Activated CD4-positive, alpha-beta T cell treated with anti-CD3 and anti-CD28 coated beads for 36 hours (primary cell): ENCODE measurements at regions of chr9 and their contacts with region 1.

Region 1: GRCh38 chr9:19102631-19103345 is at the start of gene HAUS6:
- DNase-seq: peak; percentile 98
- ATAC-seq: peak; percentile 98
- H3K4me3 Mint-ChIP-seq: peak within 1 kb of the TSS; percentile 96
- H3K27ac Mint-ChIP-seq: peak within 1 kb of the TSS; percentile 96
- H3K4me1 Mint-ChIP-seq: peaks cover 25% of the 10 kb centered on the region
- H3K27me3 Mint-ChIP-seq: no peaks in the 10 kb centered on the region
- total RNA-seq, gene HAUS6: 29.3 to 32.5 TPM

Region 2: DNA sequence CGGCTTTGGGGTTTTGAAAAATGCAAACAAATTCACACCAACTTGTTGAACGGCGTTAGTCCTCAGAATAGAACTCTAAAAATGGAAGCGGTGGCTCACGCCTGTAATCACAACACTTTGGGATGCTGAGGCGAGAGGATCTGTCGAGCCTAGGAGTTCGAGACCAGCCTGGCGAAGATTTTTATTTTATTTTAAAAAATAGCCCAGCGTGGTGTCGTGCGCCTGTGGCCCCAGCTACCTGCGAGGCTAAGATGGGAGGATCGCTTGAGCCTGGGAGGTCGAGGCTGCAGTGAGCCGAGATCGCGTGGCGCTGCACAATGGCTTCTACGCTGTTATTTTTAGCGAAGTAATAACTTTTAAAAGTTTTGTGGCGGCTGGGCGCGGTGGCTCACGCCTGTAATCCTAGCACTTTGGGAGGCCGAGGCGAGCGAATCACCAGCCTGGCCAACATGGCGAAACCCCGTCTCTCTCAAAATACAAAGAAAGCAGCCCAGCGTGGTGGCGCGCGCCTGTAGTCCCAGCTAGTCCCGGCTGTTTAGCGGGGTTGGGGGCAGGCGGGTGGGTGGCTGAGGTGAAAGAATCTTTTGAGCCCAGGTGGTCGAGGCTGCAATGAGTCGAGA is 25.2 kb after region 1 on chr9:
- CTCF ChIA-PET with region 1: no interaction called
- POLR2A ChIA-PET with region 1: interaction called, 3 read pairs
- intact Hi-C with region 1: loop called (anchors 1 kb)
- DNase-seq: peak; percentile 54
- ATAC-seq: peak; percentile 14
- H3K4me3 Mint-ChIP-seq: peak overlapping the region; percentile 92
- H3K27ac Mint-ChIP-seq: peak overlapping the region; percentile 88
- H3K4me1 Mint-ChIP-seq: peaks cover 58% of the 10 kb centered on the region
- H3K27me3 Mint-ChIP-seq: no peaks in the 10 kb centered on the region

Region 3: GRCh38 chr9:19161257-19162025 is 58.7 kb after region 1 on chr9:
- CTCF ChIA-PET with region 1: no interaction called
- POLR2A ChIA-PET with region 1: no interaction called
- intact Hi-C with region 1: loop called (anchors 1 to 2 kb)
- DNase-seq: peak; percentile 78
- ATAC-seq: peak; percentile 98
- H3K4me3 Mint-ChIP-seq: peak overlapping the region; percentile 46
- H3K27ac Mint-ChIP-seq: peak overlapping the region; percentile 76
- H3K4me1 Mint-ChIP-seq: peaks cover 25% of the 10 kb centered on the region
- H3K27me3 Mint-ChIP-seq: no peaks in the 10 kb centered on the region

Region 4: GRCh38 chr9:19184144-19184917 is 81.5 kb after region 1 on chr9:
- CTCF ChIA-PET with region 1: interaction called, 3 read pairs
- POLR2A ChIA-PET with region 1: interaction called, 13 read pairs
- intact Hi-C with region 1: loop called in 1 of 2 experiments (anchors 1 kb)
- DNase-seq: peak; percentile 91
- ATAC-seq: peak; percentile 99
- H3K4me3 Mint-ChIP-seq: peak overlapping the region; percentile 56
- H3K27ac Mint-ChIP-seq: peak overlapping the region; percentile 91
- H3K4me1 Mint-ChIP-seq: peaks cover 21% of the 10 kb centered on the region
- H3K27me3 Mint-ChIP-seq: no peaks in the 10 kb centered on the region

Region 5: DNA sequence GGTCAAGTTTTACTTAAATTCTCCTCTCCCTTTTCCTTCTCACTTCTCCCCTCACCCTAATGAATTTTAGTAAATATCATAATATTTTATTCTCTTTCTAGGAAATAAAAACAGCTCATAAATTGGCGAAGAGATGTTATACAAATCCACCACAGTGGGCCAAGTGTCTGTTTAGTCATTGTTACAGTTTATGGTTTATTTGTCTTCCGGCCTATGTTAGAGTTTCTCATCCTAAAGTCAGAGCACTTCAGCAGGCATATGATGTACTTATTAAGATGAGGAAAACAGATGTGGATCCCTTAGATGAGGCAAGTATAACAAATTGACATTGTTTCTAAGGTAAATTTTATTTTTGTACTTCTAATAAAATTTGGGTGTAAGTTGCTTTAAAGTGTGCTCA is 229.1 kb after region 1 on chr9:
- CTCF ChIA-PET with region 1: no interaction called
- POLR2A ChIA-PET with region 1: no interaction called
- intact Hi-C with region 1: no loop called
- DNase-seq: no peak
- ATAC-seq: no peak
- H3K4me3 Mint-ChIP-seq: no peak overlapping the region
- H3K27ac Mint-ChIP-seq: no peak overlapping the region
- H3K4me1 Mint-ChIP-seq: no peaks in the 10 kb centered on the region
- H3K27me3 Mint-ChIP-seq: no peaks in the 10 kb centered on the region

Region 6: DNA sequence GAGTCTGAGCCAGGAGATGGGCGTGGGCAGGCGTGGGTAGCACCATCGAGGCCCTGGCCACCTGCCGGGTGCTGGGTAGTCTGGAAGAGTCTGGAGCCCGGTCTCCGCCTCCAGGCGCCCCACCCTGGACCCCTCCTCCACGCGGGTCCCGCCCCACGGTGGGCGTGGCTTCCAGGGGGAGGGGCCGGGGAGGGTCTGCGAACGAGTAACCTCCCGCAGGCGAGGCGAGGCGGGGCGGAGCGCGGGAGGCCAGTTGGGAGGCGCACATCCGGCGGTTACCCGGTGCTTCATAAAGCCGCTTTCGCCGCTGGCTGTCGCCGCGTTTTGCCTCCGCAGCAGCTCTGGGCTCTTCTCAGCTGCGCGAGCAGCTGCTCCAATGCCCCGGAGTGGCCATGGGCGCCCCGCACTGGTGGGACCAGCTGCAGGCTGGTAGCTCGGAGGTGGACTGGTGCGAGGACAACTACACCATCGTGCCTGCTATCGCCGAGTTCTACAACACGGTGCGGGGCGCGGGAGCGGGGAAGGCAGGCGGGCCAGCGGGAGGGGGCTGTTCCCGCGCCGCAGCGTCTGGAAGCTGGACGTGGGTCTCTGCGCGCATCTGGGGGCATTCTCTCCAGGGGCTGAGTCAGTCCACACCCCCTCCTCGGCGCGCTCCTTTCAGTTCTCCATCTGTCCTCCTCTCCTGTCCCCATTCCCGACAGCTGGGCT is 306.1 kb after region 1 on chr9 and contains the start of gene ACER2:
- CTCF ChIA-PET with region 1: interaction called, 3 read pairs
- POLR2A ChIA-PET with region 1: no interaction called
- intact Hi-C with region 1: loop called in 1 of 2 experiments (anchors 1 kb)
- DNase-seq: peak; percentile 96
- ATAC-seq: peak; percentile 96
- H3K4me3 Mint-ChIP-seq: peak within 1 kb of the TSS; percentile 89
- H3K27ac Mint-ChIP-seq: peak within 1 kb of the TSS; percentile 68
- H3K4me1 Mint-ChIP-seq: peaks cover 6% of the 10 kb centered on the region
- H3K27me3 Mint-ChIP-seq: no peaks in the 10 kb centered on the region
- total RNA-seq, gene ACER2: 1.5 to 1.6 TPM

Region 7: GRCh38 chr9:19456996-19457692 is 354.4 kb after region 1 on chr9:
- CTCF ChIA-PET with region 1: no interaction called
- POLR2A ChIA-PET with region 1: no interaction called
- intact Hi-C with region 1: loop called (anchors 1 to 2 kb)
- DNase-seq: peak; percentile 76
- ATAC-seq: peak; percentile 92
- H3K4me3 Mint-ChIP-seq: no peak overlapping the region
- H3K27ac Mint-ChIP-seq: no peak overlapping the region
- H3K4me1 Mint-ChIP-seq: peaks cover 9% of the 10 kb centered on the region
- H3K27me3 Mint-ChIP-seq: no peaks in the 10 kb centered on the region